A549 (cell line): ENCODE measurements at regions of chr2 and their contacts with region 1.

Region 1: DNA sequence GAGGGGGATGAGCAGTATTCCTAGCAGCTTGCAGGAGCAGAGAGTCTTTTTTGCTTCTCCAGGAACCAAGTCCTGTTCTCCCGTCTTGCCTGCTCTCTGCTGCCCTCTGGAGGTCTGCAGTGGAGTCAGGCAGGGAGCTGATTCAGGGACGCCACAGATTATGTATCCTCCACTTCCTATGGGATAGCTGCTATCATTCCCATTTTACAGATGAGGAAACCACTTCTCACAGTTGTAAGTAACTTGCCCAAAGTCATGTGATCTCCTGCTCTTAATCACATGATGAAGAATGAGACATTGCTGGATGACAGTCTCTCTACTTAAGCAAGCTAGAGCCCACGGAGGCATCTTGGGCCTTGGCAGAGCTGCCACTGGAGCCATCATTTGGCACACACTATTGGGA is 8.3 kb downstream of the SLC4A5 start:
- DNase-seq: peak; percentile 72 to 81
- ATAC-seq: peak; percentile 90 to 96
- H3K4me3 ChIP-seq: no peak overlapping the region
- H3K27ac ChIP-seq: no peak overlapping the region
- H3K4me1 ChIP-seq: no peaks in the 10 kb centered on the region
- CTCF ChIP-seq: peak; percentile 90
- EP300 ChIP-seq: no peak
- POLR2A ChIP-seq: no peak
- RAD21 ChIP-seq: peak; percentile 72 to 83

Region 2: DNA sequence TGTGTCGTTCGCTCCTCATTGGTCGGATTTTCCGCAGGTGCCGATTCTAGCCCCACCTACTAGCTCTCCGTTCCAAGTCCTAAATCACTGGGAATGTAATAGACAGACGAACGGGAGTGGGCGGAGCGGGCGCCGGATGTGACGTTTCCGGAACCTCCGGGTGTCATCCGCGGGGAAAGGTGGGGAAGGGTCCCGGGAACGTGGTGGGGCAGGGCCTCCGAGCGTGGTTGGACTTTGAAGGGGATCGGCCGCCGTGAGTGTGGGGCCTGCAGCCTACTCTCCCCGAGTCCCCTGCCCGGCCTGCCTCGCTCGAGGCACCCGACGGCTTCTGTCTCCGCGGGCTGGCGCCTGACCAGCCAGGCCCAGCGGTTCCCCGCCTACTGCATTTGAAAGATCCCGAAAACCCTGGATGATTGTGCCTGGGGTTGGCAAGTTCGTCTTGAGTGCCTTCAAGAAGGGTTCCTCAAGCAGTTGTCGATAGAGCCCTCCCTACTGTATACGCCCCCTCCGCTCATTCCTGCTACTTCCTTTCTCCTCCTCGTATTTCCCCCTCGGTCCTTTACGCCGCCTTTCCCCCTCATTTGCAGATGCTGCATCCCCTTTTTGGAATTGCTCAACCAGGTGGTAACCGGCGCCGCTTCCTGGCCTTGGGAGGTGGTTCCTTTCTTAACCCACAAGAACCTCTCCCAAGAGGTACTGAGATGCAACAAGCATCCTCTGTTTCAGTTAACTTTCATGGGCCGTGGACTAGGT is 505.9 kb before region 1 on chr2 and contains the start of gene STAMBP:
- CTCF ChIA-PET with region 1: interaction called, 33 read pairs
- POLR2A ChIA-PET with region 1: no interaction called
- DNase-seq: peak; percentile 96 to 97
- ATAC-seq: peak; percentile 96 to 97
- H3K4me3 ChIP-seq: peak within 1 kb of the TSS; percentile 81
- H3K27ac ChIP-seq: peak within 1 kb of the TSS; percentile 88 to 95
- H3K4me1 ChIP-seq: peaks cover 23% of the 10 kb centered on the region; the same call in 2 of the 3 replicates
- CTCF ChIP-seq: no peak
- EP300 ChIP-seq: no peak
- POLR2A ChIP-seq: peak; percentile 83
- RAD21 ChIP-seq: no peak
- polyA plus RNA-seq, gene STAMBP: 86.1 and 96.3 TPM in 2 replicates

Region 3: DNA sequence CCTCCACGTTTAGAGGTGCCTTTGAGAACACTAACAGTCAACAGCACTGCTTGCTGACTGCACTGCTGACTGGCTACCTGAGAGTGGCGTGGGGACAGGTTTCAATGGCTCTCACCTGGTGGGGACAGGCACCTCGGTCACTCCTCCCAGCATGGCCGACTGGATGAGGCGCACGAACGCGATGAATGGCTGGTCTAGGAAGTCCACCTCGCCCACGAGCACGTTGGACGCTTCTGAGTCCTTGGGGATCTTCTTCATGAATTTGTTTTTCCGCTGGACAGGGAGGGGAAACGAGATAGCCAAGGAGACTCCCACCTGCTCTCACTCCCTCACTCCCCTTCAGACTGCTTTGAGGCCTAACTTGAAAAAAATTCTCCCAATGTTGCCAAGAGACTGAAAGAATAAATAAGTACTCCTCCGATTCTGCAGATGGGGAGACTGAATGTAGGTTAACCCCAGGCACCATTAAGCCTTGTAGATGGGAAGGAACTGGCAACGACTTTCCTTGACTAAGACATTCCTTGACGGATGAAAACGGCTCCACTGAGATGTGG is 79.2 kb before region 1 on chr2:
- CTCF ChIA-PET with region 1: interaction called, 66 read pairs
- POLR2A ChIA-PET with region 1: no interaction called
- DNase-seq: no peak
- ATAC-seq: no peak
- H3K4me3 ChIP-seq: no peak overlapping the region
- H3K27ac ChIP-seq: no peak overlapping the region
- H3K4me1 ChIP-seq: no peaks in the 10 kb centered on the region
- CTCF ChIP-seq: no peak
- EP300 ChIP-seq: no peak
- POLR2A ChIP-seq: no peak
- RAD21 ChIP-seq: no peak

Region 4: DNA sequence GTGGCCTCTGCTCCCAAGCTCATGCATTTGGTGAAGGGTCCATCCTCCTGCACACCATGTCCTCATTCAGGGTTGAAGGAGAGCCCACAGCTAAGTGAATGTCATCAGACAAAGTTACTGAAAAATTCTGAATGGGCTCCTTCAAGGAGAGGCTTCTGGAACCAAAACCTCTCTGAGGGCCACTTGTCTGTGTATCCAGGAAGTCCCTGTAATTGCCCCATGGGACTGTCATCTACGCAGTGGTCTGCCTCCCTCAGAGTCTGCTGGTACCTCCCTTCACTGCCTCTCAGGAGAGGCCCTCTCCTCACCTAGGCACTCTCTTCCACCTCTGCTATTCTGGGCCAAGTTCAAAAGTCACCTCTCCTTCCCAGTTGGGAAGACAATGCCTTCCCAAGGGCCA is 59.7 kb before region 1 on chr2:
- CTCF ChIA-PET with region 1: interaction called, 20 read pairs
- POLR2A ChIA-PET with region 1: no interaction called
- DNase-seq: no peak
- ATAC-seq: no peak
- H3K4me3 ChIP-seq: no peak overlapping the region
- H3K27ac ChIP-seq: no peak overlapping the region
- H3K4me1 ChIP-seq: no peaks in the 10 kb centered on the region
- CTCF ChIP-seq: no peak
- EP300 ChIP-seq: no peak
- POLR2A ChIP-seq: no peak
- RAD21 ChIP-seq: no peak

Region 5: DNA sequence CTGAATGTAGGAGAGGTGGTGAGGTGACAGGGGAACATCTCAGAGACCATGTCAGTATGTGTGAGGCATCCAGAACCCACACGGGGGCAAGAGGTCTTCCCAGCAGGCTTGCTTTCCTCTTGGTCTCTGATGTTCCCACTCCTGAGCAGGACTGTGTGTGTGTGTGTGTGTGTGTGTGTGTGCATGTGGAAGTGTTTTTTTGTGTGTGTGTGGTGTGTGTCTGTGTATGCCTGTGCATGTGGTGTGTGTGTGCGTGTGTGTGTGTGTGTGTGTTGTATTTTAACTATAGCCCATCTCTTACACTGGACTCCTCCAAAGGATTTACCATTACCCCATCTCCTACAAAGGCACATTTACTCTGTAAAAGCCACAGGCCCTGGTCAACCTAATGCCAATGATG is 32.1 kb before region 1 on chr2:
- CTCF ChIA-PET with region 1: interaction called, 22 read pairs
- POLR2A ChIA-PET with region 1: no interaction called
- DNase-seq: no peak
- ATAC-seq: peak in 1 of 2 experiments; percentile 30; a peak in 1 of 6 replicates
- H3K4me3 ChIP-seq: no peak overlapping the region
- H3K27ac ChIP-seq: no peak overlapping the region
- H3K4me1 ChIP-seq: no peaks in the 10 kb centered on the region
- CTCF ChIP-seq: no peak
- EP300 ChIP-seq: no peak
- POLR2A ChIP-seq: no peak
- RAD21 ChIP-seq: no peak

Region 6: GRCh38 chr2:74357627-74358026 is 22.7 kb after region 1 on chr2:
- CTCF ChIA-PET with region 1: interaction called, 60 read pairs
- POLR2A ChIA-PET with region 1: no interaction called
- DNase-seq: no peak
- ATAC-seq: no peak
- H3K4me3 ChIP-seq: no peak overlapping the region
- H3K27ac ChIP-seq: no peak overlapping the region
- H3K4me1 ChIP-seq: no peaks in the 10 kb centered on the region
- CTCF ChIP-seq: no peak
- EP300 ChIP-seq: no peak
- POLR2A ChIP-seq: no peak
- RAD21 ChIP-seq: no peak

Region 7: GRCh38 chr2:74391580-74392448 is 56.9 kb after region 1 on chr2:
- CTCF ChIA-PET with region 1: interaction called, 10 read pairs
- POLR2A ChIA-PET with region 1: no interaction called
- DNase-seq: peak; percentile 87 to 95
- ATAC-seq: peak; percentile 88 to 92
- H3K4me3 ChIP-seq: peak overlapping the region; percentile 72
- H3K27ac ChIP-seq: peak overlapping the region; percentile 85 to 93
- H3K4me1 ChIP-seq: peaks cover 24% of the 10 kb centered on the region
- CTCF ChIP-seq: peak; percentile 99
- EP300 ChIP-seq: no peak
- POLR2A ChIP-seq: peak; percentile 78
- RAD21 ChIP-seq: peak; percentile 48 to 61; a peak in 4 of 5 replicates

Region 8: DNA sequence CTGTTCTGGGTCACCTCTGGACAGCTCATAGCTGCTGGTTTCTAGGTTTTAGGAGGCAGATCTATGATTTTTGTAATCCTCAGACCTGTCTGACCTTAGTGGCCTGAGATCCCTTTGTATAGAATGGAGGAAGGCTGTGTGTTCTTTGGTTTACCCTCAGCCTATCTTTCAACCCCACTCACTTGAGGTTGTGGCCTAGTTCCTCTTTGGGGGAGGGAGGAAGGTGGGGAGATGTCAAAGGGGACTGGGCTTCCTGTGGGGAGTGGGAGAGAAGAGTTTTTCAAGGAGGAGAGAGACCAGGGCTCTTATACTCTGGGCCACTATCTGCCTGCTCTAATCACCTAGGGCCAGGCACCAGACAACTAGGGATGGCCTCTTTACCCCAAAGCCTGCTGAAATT is 347.6 kb after region 1 on chr2:
- CTCF ChIA-PET with region 1: no interaction called
- POLR2A ChIA-PET with region 1: no interaction called
- DNase-seq: no peak
- ATAC-seq: no peak
- H3K4me3 ChIP-seq: no peak overlapping the region
- H3K27ac ChIP-seq: no peak overlapping the region
- H3K4me1 ChIP-seq: no peaks in the 10 kb centered on the region
- CTCF ChIP-seq: no peak
- EP300 ChIP-seq: no peak
- POLR2A ChIP-seq: no peak
- RAD21 ChIP-seq: no peak